PC-9 (cell line): ENCODE measurements at regions of chr10 and their contacts with region 1.

Region 1: GRCh38 chr10:60964257-60965235 is 20.6 kb upstream of the RHOBTB1 start:
- DNase-seq: peak; percentile 64 to 94
- H3K4me3 ChIP-seq: peak overlapping the region; percentile 7; the same call in 1 of the 2 replicates
- H3K27ac ChIP-seq: peak overlapping the region; percentile 84
- H3K4me1 ChIP-seq: peaks cover 34% of the 10 kb centered on the region
- H3K27me3 ChIP-seq: no peaks in the 10 kb centered on the region
- CTCF ChIP-seq: peak; percentile 93

Region 2: DNA sequence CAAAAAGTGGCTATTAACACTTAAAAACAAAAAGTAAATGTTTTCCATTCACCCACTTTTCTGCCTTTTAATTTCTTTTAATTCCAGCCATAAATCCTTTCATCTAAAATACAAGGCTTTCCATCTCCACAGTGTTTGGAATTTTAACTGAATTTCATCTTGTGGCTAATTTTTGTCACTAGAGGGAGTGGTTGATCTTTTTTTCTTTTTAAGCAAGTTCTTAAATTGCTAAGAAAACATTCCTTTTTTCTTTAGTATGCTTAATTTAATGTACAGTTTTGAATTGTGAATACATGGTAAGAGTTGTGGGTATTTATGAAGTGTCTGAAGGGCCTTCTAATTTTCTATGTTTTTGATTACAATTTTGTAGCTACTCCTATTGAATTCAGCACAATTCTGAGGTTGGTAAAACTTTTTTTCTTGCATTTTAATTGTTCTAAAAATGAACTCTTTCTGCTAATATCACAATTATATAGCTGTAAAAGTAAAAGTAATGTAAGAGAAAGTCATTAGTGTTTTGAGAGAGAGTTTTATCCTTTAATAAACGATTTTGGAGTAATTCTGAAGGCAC is 520.0 kb before region 1 on chr10:
- CTCF ChIA-PET with region 1: no interaction called
- POLR2A ChIA-PET with region 1: no interaction called
- intact Hi-C with region 1: loop called (anchors 10 kb)
- DNase-seq: no peak
- H3K4me3 ChIP-seq: no peak overlapping the region
- H3K27ac ChIP-seq: no peak overlapping the region
- H3K4me1 ChIP-seq: peaks cover 13% of the 10 kb centered on the region
- H3K27me3 ChIP-seq: no peaks in the 10 kb centered on the region
- CTCF ChIP-seq: peak; percentile 82

Region 3: DNA sequence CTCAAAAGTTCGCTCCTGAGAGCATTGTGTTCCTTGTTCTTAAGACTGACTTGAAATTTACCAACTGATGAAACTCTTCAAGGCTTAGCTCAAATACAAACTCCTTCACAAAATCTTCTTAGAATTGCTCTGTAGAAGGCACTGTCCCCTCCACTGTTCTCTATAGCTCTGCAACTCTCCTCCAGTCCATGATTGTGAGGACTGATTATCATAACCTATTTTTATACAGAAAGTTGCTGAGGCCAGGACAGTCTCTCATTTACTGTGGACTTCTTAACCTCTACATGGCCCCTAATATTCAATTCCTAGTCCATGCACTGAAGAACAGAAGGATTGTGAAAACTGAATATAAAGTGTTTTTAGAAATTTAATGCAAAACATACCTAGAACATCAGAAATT is 73.7 kb before region 1 on chr10:
- CTCF ChIA-PET with region 1: no interaction called
- POLR2A ChIA-PET with region 1: no interaction called
- intact Hi-C with region 1: no loop called
- DNase-seq: no peak
- H3K4me3 ChIP-seq: no peak overlapping the region
- H3K27ac ChIP-seq: no peak overlapping the region
- H3K4me1 ChIP-seq: peaks cover 22% of the 10 kb centered on the region
- H3K27me3 ChIP-seq: no peaks in the 10 kb centered on the region
- CTCF ChIP-seq: no peak

Region 4: DNA sequence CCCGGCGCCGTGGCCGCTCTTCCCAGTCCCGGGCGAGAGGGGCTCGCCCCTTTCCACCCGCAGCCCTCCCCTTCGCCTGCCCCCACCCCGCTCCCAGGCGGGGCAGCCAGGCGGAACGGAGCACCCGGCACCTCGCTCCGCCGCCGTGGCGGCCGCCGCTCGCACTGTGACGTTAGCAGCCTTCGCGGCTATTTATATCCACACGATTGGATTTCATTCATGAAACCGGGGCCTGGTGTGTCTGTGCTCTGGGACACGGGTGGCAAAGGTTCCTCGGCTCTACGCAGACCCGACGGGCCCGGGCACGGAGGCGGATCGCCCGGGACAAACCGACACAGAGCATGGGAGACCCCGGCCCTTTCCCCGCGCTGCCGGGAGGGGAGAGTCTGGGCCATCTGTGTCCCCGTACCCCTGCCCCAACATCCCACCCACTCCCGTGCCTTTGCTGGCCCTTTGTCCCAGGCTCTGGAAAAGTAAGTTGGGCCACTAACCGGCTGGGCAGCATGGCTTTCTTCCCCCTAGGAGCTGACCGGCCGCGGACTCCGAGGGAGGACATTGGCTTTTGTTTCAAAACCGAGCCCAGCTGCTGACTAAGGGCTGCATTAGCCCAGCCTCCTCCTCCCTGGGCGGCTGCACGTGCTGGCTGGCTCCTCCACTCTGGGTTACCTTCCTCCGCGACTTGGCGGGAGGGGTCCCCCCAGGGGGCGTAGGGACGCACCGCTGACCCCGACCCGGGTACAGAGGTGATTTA is 20.2 kb before region 1 on chr10 and contains the start of gene RHOBTB1:
- CTCF ChIA-PET with region 1: interaction called, 3 read pairs
- POLR2A ChIA-PET with region 1: no interaction called
- intact Hi-C with region 1: loop called (anchors 1 kb)
- DNase-seq: peak; percentile 62 to 77
- H3K4me3 ChIP-seq: peak within 1 kb of the TSS; percentile 95
- H3K27ac ChIP-seq: peak within 1 kb of the TSS; percentile 73
- H3K4me1 ChIP-seq: peaks cover 12% of the 10 kb centered on the region
- H3K27me3 ChIP-seq: no peaks in the 10 kb centered on the region
- CTCF ChIP-seq: no peak
- total RNA-seq, gene RHOBTB1: 5.2 and 7.8 TPM in 2 replicates

Region 5: GRCh38 chr10:60978287-60979115 is 14.0 kb after region 1 on chr10:
- CTCF ChIA-PET with region 1: interaction called, 3 read pairs
- POLR2A ChIA-PET with region 1: interaction called, 19 read pairs
- intact Hi-C with region 1: no loop called
- DNase-seq: peak; percentile 27 to 88
- H3K4me3 ChIP-seq: no peak overlapping the region
- H3K27ac ChIP-seq: peak overlapping the region; percentile 7; the same call in 1 of the 2 replicates
- H3K4me1 ChIP-seq: peaks cover 43% of the 10 kb centered on the region
- H3K27me3 ChIP-seq: no peaks in the 10 kb centered on the region
- CTCF ChIP-seq: no peak

Region 6: DNA sequence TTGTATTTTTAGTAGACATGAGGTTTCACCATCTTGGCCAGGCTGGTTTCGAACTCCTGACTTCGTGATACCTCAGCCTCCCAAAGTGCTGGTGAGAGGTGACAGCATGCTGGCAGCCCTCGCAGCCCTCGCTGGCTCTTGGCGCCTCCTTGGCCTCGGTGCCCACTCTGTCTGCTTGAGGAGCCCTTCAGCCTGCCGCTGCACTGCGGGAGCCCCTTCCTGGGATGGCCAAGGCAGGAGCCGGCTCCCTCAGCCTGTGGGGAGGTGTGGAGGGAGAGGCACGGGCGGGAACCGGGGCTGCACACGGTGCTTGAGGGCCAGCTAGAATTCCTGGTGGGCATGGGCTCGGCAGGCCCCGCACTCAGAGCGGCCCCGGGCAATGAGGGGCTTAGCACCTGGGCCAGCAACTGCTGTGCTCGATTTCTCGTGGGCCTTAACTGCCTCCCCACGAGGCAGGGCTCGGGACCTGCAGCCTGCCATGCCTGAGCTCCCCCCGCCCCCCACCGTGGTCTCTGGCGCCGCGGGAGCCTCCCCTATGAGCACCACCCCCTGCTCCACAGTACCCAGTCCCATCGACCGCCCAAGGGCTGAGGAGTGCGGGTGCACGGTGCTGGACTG is 76.0 kb after region 1 on chr10:
- CTCF ChIA-PET with region 1: no interaction called
- POLR2A ChIA-PET with region 1: no interaction called
- intact Hi-C with region 1: loop called (anchors 1 kb)
- DNase-seq: no peak
- H3K4me3 ChIP-seq: no peak overlapping the region
- H3K27ac ChIP-seq: no peak overlapping the region
- H3K4me1 ChIP-seq: peaks cover 33% of the 10 kb centered on the region
- H3K27me3 ChIP-seq: no peaks in the 10 kb centered on the region
- CTCF ChIP-seq: no peak

Region 7: GRCh38 chr10:61189912-61190311 is 225.4 kb after region 1 on chr10:
- CTCF ChIA-PET with region 1: no interaction called
- POLR2A ChIA-PET with region 1: no interaction called
- intact Hi-C with region 1: loop called (anchors 5 kb)
- DNase-seq: no peak
- H3K4me3 ChIP-seq: no peak overlapping the region
- H3K27ac ChIP-seq: no peak overlapping the region
- H3K4me1 ChIP-seq: no peaks in the 10 kb centered on the region
- H3K27me3 ChIP-seq: no peaks in the 10 kb centered on the region
- CTCF ChIP-seq: no peak

Region 8: DNA sequence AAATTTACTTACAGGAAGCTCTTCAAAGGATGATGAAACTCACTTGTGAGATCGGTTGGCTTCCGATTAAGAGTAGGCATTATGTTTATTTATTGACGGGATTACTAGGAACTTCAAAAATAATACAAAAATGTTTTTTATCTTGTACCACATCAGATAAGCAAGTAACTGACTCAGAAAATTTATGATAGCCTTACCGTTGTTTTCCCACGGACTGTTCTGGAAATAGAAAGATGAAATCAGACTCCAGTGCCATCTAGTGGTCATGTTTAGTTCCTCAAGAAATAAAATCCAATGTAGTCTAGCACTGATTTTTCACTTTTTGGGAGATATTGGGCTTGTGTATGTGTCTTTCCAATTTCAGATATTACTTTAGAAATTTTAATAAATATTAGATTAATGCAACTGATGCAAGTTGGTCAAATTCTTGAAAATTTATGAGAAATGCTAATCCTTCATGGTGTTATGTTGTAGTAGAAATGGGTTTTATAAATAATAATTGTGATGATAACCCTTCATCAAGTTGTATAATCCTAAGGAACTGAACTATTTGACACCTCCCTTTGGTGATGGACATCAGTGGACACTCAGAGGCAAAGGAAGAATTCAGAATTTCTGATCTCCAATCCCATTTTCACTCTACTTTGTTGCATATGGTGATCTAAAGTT is 319.8 kb after region 1 on chr10:
- CTCF ChIA-PET with region 1: no interaction called
- POLR2A ChIA-PET with region 1: no interaction called
- intact Hi-C with region 1: loop called (anchors 10 kb)
- DNase-seq: peak in 1 of 2 experiments; percentile 74
- H3K4me3 ChIP-seq: 0 out of 2 replicates have a peak overlapping the region, but pooled peaks have one; percentile 14
- H3K27ac ChIP-seq: 0 out of 2 replicates have a peak overlapping the region, but pooled peaks have one; percentile 9
- H3K4me1 ChIP-seq: peaks cover 6% of the 10 kb centered on the region; the same call in 1 of the 2 replicates
- H3K27me3 ChIP-seq: no peaks in the 10 kb centered on the region
- CTCF ChIP-seq: peak; percentile 91